ENCODE measurements at regions of chr7 and their contacts with region 1.

Region 1: GRCh38 chr7:92447345-92448204 is at the start of gene GATAD1:
- DNase-seq: peak; percentile 91
- ATAC-seq: peak; percentile 84
- H3K4me3 ChIP-seq: peak within 1 kb of the TSS; percentile 69 to 97 (median 93)
- H3K4me3 Mint-ChIP-seq: peak within 1 kb of the TSS; percentile 94
- H3K27ac ChIP-seq: peak within 1 kb of the TSS; percentile 89 to 97
- H3K27ac Mint-ChIP-seq: peak within 1 kb of the TSS; percentile 97
- H3K4me1 ChIP-seq: peaks cover 6 to 12% of the 10 kb centered on the region in 2 donors
- H3K4me1 Mint-ChIP-seq: peaks cover 8% of the 10 kb centered on the region
- H3K27me3 ChIP-seq: no peaks in the 10 kb centered on the region
- H3K27me3 Mint-ChIP-seq: no peaks in the 10 kb centered on the region
- CTCF ChIP-seq: peak; percentile 84
- total RNA-seq, gene GATAD1: 65.9 and 71.7 TPM in 2 replicates

Region 2: DNA sequence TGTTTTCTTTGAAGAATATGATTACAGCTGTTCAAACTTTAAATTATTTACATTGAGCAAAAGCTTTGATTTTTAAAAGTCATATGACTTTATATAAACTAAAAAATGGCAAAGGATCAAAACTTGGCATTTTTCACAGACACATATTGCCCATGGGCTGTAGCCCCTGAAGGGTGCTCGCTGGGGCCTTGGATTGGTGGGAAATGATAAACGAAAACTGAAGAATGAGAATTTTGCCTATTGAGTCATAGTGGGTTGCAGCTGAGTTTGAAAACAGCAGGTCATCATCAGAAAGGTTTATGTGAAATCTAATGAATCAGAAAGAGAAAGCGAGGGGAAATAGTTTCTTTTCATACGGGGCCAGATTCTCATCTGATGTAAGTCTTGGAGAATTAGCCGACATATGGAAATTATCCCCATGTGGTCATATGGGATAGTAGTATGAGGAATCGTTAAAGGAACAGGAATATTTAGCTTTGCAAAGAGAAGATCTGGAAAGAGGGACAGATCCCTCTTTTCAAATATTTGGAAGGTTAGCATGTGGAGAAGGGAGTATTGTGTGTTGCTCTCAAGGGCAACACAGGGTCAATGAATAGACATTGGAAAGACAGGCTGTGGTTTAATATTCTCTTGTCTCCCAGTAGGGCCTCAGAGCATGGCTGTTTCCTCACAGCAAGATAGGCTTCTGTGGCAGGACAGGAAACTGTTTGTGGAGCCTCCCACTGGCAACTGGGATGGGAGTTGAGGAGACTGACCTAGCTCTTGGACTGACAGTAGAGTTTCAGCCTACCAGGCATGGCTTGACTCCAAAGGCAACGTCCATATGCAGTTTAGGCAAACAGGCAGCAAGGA is 1064.3 kb before region 1 on chr7:
- CTCF ChIA-PET with region 1: no interaction called
- POLR2A ChIA-PET with region 1: no interaction called
- intact Hi-C with region 1: no loop called
- DNase-seq: no peak
- ATAC-seq: no peak
- H3K4me3 ChIP-seq: no peak overlapping the region
- H3K4me3 Mint-ChIP-seq: no peak overlapping the region
- H3K27ac ChIP-seq: no peak overlapping the region
- H3K27ac Mint-ChIP-seq: no peak overlapping the region
- H3K4me1 ChIP-seq: no peaks in the 10 kb centered on the region
- H3K4me1 Mint-ChIP-seq: no peaks in the 10 kb centered on the region
- H3K27me3 ChIP-seq: no peaks in the 10 kb centered on the region
- H3K27me3 Mint-ChIP-seq: no peaks in the 10 kb centered on the region
- CTCF ChIP-seq: no peak

Region 3: GRCh38 chr7:91835846-91836368 is 611.7 kb before region 1 on chr7:
- CTCF ChIA-PET with region 1: interaction called, 32 read pairs
- POLR2A ChIA-PET with region 1: no interaction called
- intact Hi-C with region 1: loop called (anchors 2 kb)
- DNase-seq: no peak
- ATAC-seq: no peak
- H3K4me3 ChIP-seq: no peak overlapping the region
- H3K4me3 Mint-ChIP-seq: no peak overlapping the region
- H3K27ac ChIP-seq: no peak overlapping the region
- H3K27ac Mint-ChIP-seq: no peak overlapping the region
- H3K4me1 ChIP-seq: no peaks in the 10 kb centered on the region
- H3K4me1 Mint-ChIP-seq: no peaks in the 10 kb centered on the region
- H3K27me3 ChIP-seq: no peaks in the 10 kb centered on the region
- H3K27me3 Mint-ChIP-seq: no peaks in the 10 kb centered on the region
- CTCF ChIP-seq: no peak

Region 4: DNA sequence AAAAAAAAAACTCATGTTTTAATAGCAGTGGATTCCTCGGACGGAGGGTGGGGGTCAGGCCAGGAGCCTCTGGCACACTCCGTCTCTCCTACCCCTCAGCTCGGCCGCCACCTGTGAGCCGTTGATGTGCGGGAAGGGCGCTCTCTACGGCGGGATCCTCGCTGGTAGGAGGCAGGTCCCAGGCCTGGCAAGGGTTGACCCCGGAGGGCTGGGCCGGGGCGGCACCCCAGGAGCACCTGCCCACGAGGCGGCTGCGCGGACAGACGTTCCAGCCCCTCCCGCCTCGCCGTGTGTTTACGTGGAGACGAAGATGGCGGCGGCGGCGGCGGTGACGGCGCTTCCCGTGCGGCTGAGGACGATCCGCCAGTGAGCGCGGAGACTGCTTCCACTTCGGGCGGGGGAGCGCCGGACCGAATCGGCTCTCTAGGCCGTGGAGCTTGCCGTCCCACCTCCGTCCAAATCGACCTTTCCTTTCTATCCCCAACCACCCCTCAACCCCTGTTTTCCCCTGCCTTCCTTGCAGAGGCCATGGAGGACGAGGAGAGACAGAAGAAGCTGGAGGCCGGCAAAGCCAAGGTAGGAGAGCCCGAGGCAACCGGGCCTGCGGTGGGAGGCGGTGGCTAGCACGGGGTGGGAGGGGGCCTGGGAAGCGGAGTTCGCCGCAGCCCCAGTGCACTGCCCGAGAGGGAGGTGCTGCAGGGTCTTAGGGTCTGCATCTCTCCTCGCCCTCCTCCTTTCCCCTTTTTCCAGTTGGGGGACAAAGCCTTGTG is 506.8 kb before region 1 on chr7 and contains the start of gene AKAP9:
- CTCF ChIA-PET with region 1: interaction called, 3 read pairs
- POLR2A ChIA-PET with region 1: no interaction called
- intact Hi-C with region 1: loop called (anchors 1 kb)
- DNase-seq: peak; percentile 93
- ATAC-seq: peak; percentile 92
- H3K4me3 ChIP-seq: peak within 1 kb of the TSS; percentile 74 to 98 (median 83)
- H3K4me3 Mint-ChIP-seq: peak within 1 kb of the TSS; percentile 95
- H3K27ac ChIP-seq: peak within 1 kb of the TSS; percentile 90 to 97
- H3K27ac Mint-ChIP-seq: peak within 1 kb of the TSS; percentile 95
- H3K4me1 ChIP-seq: peaks cover 20 to 22% of the 10 kb centered on the region in 2 donors
- H3K4me1 Mint-ChIP-seq: peaks cover 31% of the 10 kb centered on the region
- H3K27me3 ChIP-seq: no peaks in the 10 kb centered on the region
- H3K27me3 Mint-ChIP-seq: no peaks in the 10 kb centered on the region
- CTCF ChIP-seq: no peak
- total RNA-seq, gene AKAP9: 101 and 106 TPM in 2 replicates

Region 5: DNA sequence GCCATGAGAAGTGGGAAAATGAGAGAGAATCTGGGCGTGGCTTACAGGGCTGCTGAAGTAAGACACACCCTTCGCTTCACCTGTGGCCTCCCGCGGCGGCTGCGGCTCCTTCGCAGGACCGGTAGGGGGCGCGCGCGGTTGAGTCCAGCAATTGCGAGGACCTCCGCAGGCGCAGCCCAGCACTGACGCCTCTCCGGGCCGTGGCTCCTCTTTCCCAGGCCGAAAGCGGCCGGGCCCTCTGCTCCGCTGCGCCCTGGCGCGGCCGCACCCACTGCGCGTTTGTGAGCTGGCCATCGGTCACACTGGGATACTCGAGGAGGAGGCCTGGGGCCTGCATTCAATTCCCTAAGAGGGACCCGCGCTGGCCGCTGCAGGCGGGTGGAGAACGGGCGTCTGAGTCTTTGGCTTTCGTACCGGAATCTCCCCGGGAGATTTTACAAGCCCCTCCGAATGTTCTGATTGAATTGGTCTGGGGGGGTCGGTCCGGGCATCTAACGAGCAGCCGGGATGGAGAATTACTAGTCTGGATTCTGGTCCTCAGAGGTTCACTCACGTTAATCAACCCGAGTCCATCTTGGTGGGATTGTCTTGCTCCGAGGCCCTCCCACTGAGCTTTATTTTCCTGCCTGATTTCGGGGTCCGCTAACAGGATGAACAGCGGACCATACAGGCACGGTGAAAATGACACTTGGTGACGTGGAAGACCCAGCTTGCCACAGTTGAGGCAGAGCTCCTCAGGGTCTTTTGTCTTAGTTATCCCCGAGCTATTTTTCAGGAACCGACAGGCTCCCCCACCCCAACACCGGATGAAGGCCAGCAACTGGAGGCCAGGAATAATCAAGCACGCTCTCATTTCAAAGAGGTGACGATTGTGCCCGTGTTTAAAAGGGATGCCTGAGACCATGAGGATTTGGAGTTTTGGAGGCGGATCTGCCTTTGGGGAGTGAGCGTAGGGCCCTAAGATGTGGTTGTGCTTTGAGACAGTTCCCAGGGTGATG is 268.3 kb before region 1 on chr7 and contains the start of gene LRRD1:
- CTCF ChIA-PET with region 1: interaction called, 9 read pairs
- POLR2A ChIA-PET with region 1: no interaction called
- intact Hi-C with region 1: loop called (anchors 1 kb)
- DNase-seq: peak; percentile 89
- ATAC-seq: peak; percentile 100
- H3K4me3 ChIP-seq: peak within 1 kb of the TSS; percentile 21 to 73 (median 56)
- H3K4me3 Mint-ChIP-seq: peak within 1 kb of the TSS; percentile 83
- H3K27ac ChIP-seq: no peak within 1 kb of the TSS
- H3K27ac Mint-ChIP-seq: peak within 1 kb of the TSS; percentile 41
- H3K4me1 ChIP-seq: peaks cover 7 to 9% of the 10 kb centered on the region in 2 donors
- H3K4me1 Mint-ChIP-seq: peaks cover 10% of the 10 kb centered on the region
- H3K27me3 ChIP-seq: no peaks in the 10 kb centered on the region
- H3K27me3 Mint-ChIP-seq: peaks cover 4% of the 10 kb centered on the region
- CTCF ChIP-seq: peak; percentile 100
- total RNA-seq, gene LRRD1: 0.15 and 0.17 TPM in 2 replicates

Region 6: DNA sequence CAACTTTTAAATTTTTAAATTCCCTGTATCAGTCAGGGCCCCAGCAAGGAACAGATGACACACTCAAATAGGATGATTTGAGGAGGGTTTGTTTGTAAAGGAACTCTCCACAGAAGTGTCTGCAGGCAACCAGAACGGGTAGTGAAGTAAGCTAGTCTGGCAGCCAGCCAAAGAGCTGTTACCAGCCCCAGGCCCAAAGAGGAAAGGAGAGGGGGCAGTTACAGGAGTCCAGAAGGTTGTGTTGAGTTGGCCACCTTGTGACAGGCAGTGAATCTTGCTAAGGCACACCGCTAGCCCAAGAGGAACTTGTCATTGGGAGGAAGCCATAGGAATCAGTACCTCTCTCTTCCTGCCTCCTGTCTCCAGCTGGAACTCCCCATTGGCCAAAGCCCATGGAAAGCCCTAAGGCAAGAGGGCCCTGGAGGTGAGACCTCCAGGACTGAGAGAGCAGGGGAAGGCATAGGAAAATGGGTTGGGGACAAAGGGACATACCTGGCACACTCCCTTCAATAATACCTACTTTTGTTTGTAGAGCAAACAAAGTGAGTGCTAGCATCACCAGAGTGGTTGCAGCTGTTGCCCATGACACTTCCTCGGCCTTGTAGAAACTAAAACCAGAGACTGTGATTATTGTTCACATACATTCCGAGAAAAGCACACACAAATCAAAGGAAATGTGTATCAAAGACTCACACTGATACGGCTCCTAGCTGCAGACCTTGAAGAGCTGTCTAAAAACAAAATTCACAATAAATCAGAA is 25.7 kb before region 1 on chr7:
- CTCF ChIA-PET with region 1: interaction called, 133 read pairs
- POLR2A ChIA-PET with region 1: interaction called, 6 read pairs
- intact Hi-C with region 1: loop called (anchors 1 kb)
- DNase-seq: no peak
- ATAC-seq: no peak
- H3K4me3 ChIP-seq: no peak overlapping the region
- H3K4me3 Mint-ChIP-seq: no peak overlapping the region
- H3K27ac ChIP-seq: no peak overlapping the region
- H3K27ac Mint-ChIP-seq: no peak overlapping the region
- H3K4me1 ChIP-seq: peaks cover 4% of the 10 kb centered on the region in 2 donors
- H3K4me1 Mint-ChIP-seq: peaks cover 10% of the 10 kb centered on the region
- H3K27me3 ChIP-seq: peaks cover 0 to 6% (median 0%) of the 10 kb centered on the region in 4 experiments
- H3K27me3 Mint-ChIP-seq: peaks cover 20% of the 10 kb centered on the region
- CTCF ChIP-seq: no peak

Region 7: GRCh38 chr7:92590711-92591310 is 143.2 kb after region 1 on chr7:
- CTCF ChIA-PET with region 1: interaction called, 3 read pairs
- POLR2A ChIA-PET with region 1: interaction called, 5 read pairs
- intact Hi-C with region 1: loop called (anchors 1 kb)
- DNase-seq: no peak
- ATAC-seq: no peak
- H3K4me3 ChIP-seq: peak overlapping the region in 4 of 5 experiments; percentile 84 to 88 (median 86)
- H3K4me3 Mint-ChIP-seq: peak overlapping the region; percentile 94
- H3K27ac ChIP-seq: no peak overlapping the region
- H3K27ac Mint-ChIP-seq: peak overlapping the region; percentile 11
- H3K4me1 ChIP-seq: peaks cover 22 to 25% of the 10 kb centered on the region in 2 donors
- H3K4me1 Mint-ChIP-seq: peaks cover 41% of the 10 kb centered on the region
- H3K27me3 ChIP-seq: no peaks in the 10 kb centered on the region
- H3K27me3 Mint-ChIP-seq: no peaks in the 10 kb centered on the region
- CTCF ChIP-seq: no peak

Region 8: GRCh38 chr7:92695308-92696261 is 248.0 kb after region 1 on chr7:
- CTCF ChIA-PET with region 1: no interaction called
- POLR2A ChIA-PET with region 1: no interaction called
- intact Hi-C with region 1: no loop called
- DNase-seq: no peak
- ATAC-seq: no peak
- H3K4me3 ChIP-seq: no peak overlapping the region
- H3K4me3 Mint-ChIP-seq: peak overlapping the region; percentile 13
- H3K27ac ChIP-seq: no peak overlapping the region
- H3K27ac Mint-ChIP-seq: no peak overlapping the region
- H3K4me1 ChIP-seq: no peaks in the 10 kb centered on the region
- H3K4me1 Mint-ChIP-seq: peaks cover 6% of the 10 kb centered on the region
- H3K27me3 ChIP-seq: no peaks in the 10 kb centered on the region
- H3K27me3 Mint-ChIP-seq: no peaks in the 10 kb centered on the region
- CTCF ChIP-seq: no peak